AG04449 (cell line): ENCODE measurements at regions of chr19 and their contacts with region 1.

Region 1: GRCh38 chr19:15251749-15252397 is 19.6 kb upstream of the EPHX3 start:
- DNase-seq: peak; percentile 90
- H3K4me3 ChIP-seq: peak overlapping the region; percentile 38
- CTCF ChIP-seq: peak; percentile 88

Region 2: GRCh38 chr19:15177269-15178116 is 74.4 kb before region 1 on chr19:
- CTCF ChIA-PET with region 1: interaction called, 87 read pairs
- POLR2A ChIA-PET with region 1: interaction called, 4 read pairs
- DNase-seq: no peak
- H3K4me3 ChIP-seq: no peak overlapping the region
- CTCF ChIP-seq: peak; percentile 98

Region 3: GRCh38 chr19:15195371-15196334 is 56.2 kb before region 1 on chr19:
- CTCF ChIA-PET with region 1: interaction called, 21 read pairs
- POLR2A ChIA-PET with region 1: interaction called, 3 read pairs
- DNase-seq: no peak
- H3K4me3 ChIP-seq: peak overlapping the region; percentile 44
- CTCF ChIP-seq: peak; percentile 45

Region 4: DNA sequence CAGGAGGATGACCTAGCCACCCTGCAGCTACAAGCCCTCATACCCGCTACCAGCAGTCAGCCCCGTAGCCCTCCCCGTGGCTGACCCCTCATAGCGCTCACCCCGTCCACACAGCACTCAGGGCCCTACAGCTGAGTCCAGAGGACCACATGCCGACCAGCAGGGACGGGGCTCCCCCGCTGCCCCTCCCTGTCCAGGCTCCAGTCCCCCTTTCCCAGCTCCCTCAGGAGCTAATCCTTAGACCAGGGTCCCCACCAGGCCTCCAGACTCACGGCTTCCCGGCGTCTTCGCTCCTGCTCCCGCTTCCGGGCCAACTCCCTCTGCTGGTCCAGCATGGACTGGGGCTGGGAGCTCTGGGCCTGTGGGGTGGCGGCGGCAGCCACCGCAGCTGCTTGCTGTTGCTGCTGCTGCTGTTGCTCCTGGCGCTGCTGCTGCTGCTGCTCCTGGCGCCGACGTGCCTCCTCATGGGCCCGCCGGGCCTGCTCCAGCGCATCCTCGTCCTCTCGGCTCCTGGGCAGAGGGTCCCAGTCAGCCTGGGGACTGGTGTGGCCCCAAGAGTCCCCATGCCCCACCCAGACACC is 13.3 kb before region 1 on chr19:
- CTCF ChIA-PET with region 1: interaction called, 21 read pairs
- POLR2A ChIA-PET with region 1: no interaction called
- DNase-seq: no peak
- H3K4me3 ChIP-seq: no peak overlapping the region
- CTCF ChIP-seq: no peak

Region 5: DNA sequence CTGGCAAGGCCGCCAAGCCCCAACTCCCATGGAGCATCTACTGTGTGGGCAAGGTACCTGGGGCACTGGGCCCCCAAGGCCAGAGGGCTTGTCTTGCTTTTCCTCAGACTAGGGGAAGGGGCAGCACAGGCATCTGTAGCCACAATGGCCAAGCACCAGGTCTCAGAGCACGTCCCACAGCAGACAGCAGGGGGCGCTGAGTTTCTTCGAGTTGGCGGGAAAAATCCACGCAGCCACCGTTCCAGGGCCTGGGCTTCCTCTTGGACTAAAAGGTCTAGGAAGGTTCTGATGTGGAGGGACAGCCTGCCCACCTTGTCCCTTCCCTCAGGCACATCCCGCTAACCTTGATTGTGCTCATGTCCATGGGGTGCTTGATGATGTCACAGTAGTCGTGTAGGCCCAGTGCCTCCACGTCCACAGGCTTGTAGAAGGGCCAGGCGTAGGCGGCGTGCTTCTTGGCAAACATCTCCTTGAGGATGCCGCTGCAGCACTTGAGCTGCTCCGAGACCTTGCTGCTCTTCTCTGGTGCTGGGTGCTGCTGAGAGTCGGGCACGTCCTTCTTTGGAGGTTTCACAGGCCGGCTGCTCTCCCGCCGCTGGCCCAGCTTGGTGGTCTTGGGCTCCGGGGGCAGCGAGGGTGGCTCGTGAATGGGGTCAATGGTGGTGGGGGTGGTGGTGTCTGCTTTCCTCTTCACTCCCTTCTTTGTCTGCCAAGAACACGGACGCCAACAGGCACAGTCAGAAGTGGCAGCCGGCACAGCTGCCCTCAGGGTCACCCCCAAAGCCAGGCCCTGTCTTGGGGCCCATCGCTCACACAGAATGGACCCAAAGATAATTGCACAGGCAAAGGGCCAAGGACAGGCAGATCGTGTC is 12.4 kb after region 1 on chr19:
- CTCF ChIA-PET with region 1: interaction called, 107 read pairs
- POLR2A ChIA-PET with region 1: no interaction called
- DNase-seq: no peak
- H3K4me3 ChIP-seq: no peak overlapping the region
- CTCF ChIP-seq: peak; percentile 81

Region 6: GRCh38 chr19:15379083-15379995 is 127.5 kb after region 1 on chr19 and contains the start of gene AKAP8:
- CTCF ChIA-PET with region 1: interaction called, 4 read pairs
- POLR2A ChIA-PET with region 1: interaction called, 25 read pairs
- DNase-seq: peak; percentile 87
- H3K4me3 ChIP-seq: peak within 1 kb of the TSS; percentile 98
- CTCF ChIP-seq: no peak

Region 7: DNA sequence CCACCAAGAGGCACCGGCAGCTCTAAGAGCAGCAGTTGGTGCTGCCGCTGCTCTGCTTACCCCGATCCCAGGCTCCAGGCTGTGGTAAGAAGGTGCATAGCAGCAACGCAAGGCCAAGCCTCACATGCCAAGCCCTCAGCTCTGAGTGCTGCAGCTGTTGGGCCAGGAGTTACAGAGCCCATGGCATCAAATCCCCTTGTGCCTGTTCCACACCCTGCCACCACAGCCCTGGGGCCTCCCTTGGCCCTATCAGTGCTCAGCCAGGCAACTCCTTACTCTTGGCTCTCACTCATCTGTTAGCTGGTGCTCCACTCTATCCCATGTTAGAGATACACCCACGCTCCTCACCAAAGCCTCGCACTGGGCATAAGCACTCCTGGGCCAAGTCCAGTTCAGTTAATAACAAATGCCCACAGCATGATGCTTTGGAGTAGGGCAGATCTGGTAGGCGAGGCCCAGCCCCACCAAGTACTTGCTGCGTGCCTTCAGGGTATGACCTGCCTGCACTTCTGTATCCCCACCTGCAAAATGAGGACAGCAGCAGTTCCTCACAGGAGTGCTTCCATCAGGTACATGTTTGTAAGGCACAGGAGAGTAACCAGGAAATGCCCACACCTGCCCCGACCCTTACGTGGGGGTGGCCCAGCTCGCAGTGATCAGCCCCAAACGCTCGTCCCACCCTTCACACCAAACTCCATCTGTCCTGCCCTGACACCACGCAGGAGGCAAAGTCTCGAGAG is 150.7 kb after region 1 on chr19:
- CTCF ChIA-PET with region 1: no interaction called
- POLR2A ChIA-PET with region 1: no interaction called
- DNase-seq: no peak
- H3K4me3 ChIP-seq: no peak overlapping the region
- CTCF ChIP-seq: no peak